MCF 10A (cell line): ENCODE measurements at regions of chr11 and their contacts with region 1.

Region 1: DNA sequence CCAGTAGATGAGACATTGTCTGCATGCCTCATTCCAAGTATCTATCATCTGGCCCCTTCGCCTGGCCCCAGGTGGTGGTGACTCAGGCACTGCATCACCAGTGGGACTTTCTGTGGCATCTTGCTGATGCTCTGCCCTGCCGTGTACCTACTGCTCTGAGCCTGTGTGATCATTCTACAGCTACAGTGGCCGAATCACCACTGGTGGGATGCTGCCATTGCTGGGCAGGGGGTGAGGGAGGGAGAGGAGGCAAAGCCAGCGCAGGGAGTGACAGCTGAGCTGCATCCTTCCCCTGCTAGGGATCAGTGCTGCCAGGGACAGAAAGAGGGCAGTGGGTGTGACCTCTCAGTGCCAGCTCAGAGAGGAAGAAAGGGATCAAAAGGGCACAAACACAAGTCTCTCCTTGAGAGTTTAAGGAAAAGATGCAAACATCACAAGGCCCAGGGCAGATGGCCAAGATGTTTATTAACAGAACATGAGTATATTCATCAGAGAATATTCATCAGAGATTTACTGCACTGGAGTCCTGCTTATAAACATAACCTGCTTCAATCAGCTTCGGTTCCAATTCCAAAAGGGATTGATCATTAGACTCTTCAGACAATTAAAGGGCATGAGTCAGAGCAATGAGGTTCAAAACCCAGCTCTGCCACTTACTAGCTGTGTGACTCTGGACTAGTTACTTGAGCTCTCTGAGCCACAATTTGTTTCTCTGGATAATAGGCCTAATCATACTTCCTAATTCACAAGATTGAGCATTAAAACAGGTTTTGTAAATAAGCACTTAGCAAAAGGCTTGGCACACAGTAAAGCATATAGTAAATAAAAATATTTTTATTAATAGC is 109.8 kb downstream of the NAT10 start:
- DNase-seq: peak; percentile 49
- H3K4me3 Mint-ChIP-seq: no peak overlapping the region
- H3K27ac Mint-ChIP-seq: peak overlapping the region; percentile 56
- H3K4me1 Mint-ChIP-seq: peaks cover 6% of the 10 kb centered on the region
- H3K27me3 Mint-ChIP-seq: no peaks in the 10 kb centered on the region
- CTCF ChIP-seq: no peak

Region 2: GRCh38 chr11:34192481-34193401 is 22.4 kb before region 1 on chr11:
- CTCF ChIA-PET with region 1: no interaction called
- POLR2A ChIA-PET with region 1: interaction called, 10 read pairs
- intact Hi-C with region 1: no loop called
- DNase-seq: peak; percentile 95
- H3K4me3 Mint-ChIP-seq: peak overlapping the region; percentile 64
- H3K27ac Mint-ChIP-seq: peak overlapping the region; percentile 74
- H3K4me1 Mint-ChIP-seq: peaks cover 11% of the 10 kb centered on the region
- H3K27me3 Mint-ChIP-seq: no peaks in the 10 kb centered on the region
- CTCF ChIP-seq: no peak